CD4-positive, alpha-beta T cell (primary cell): ENCODE measurements at regions of chr9 and their contacts with region 1.

Region 1: DNA sequence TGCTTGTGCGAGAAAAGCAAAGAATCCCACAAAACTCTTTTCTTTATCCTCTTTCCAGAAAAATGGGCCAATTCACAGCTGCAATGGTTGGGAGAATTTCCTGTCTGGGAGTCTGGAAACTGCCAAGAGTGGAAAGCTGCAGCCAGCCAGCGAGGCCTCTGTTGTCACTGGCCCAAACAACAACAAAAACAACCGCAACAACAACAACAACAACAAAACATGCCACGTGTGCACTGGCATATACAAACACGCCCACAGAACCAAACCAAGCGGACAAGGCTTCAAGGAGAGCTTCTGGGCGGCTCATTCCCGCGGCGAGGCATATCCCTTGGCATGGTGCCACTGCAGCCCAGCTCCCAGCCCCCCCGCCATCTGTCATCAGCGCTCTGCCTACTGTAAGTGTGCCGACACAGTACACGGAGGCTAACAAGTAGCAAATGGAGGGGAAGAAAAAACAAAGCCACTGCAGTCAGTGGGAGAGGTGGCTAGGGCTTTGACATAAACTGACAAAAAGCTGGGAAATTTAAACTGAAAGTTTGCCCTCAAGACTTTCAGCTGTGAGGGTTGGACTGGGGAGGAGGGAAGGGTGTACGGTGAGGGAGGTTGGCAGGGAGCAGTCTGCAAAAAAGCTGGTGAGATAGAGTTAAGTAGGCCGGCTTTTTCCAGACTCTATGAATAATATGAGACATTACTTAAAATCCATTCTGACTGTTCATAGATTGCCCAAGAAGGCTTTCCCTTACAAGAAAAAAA is 165.0 kb upstream of the ZNF462 start:
- DNase-seq: no peak
- ATAC-seq: no peak
- H3K4me3 ChIP-seq: no peak overlapping the region
- H3K4me3 Mint-ChIP-seq: no peak overlapping the region
- H3K27ac ChIP-seq: no peak overlapping the region
- H3K27ac Mint-ChIP-seq: no peak overlapping the region
- H3K4me1 ChIP-seq: no peaks in the 10 kb centered on the region
- H3K4me1 Mint-ChIP-seq: no peaks in the 10 kb centered on the region
- H3K27me3 ChIP-seq: no peaks in the 10 kb centered on the region
- H3K27me3 Mint-ChIP-seq: no peaks in the 10 kb centered on the region
- CTCF ChIP-seq: no peak

Region 2: GRCh38 chr9:106682435-106683230 is 15.3 kb before region 1 on chr9:
- CTCF ChIA-PET with region 1: no interaction called
- POLR2A ChIA-PET with region 1: no interaction called
- intact Hi-C with region 1: loop called in 1 of 2 experiments (anchors 1 kb)
- DNase-seq: no peak
- ATAC-seq: no peak
- H3K4me3 ChIP-seq: no peak overlapping the region
- H3K4me3 Mint-ChIP-seq: no peak overlapping the region
- H3K27ac ChIP-seq: no peak overlapping the region
- H3K27ac Mint-ChIP-seq: no peak overlapping the region
- H3K4me1 ChIP-seq: no peaks in the 10 kb centered on the region
- H3K4me1 Mint-ChIP-seq: no peaks in the 10 kb centered on the region
- H3K27me3 ChIP-seq: no peaks in the 10 kb centered on the region
- H3K27me3 Mint-ChIP-seq: no peaks in the 10 kb centered on the region
- CTCF ChIP-seq: no peak